ENCODE measurements at regions of chr10 and their contacts with region 1.

Region 1: GRCh38 chr10:76868098-76868977 is 769.3 kb downstream of the KCNMA1 start:
- DNase-seq: peak; percentile 40
- H3K4me3 ChIP-seq: no peak overlapping the region
- H3K27me3 ChIP-seq: peaks cover 2% of the 10 kb centered on the region
- CTCF ChIP-seq: no peak

Region 2: DNA sequence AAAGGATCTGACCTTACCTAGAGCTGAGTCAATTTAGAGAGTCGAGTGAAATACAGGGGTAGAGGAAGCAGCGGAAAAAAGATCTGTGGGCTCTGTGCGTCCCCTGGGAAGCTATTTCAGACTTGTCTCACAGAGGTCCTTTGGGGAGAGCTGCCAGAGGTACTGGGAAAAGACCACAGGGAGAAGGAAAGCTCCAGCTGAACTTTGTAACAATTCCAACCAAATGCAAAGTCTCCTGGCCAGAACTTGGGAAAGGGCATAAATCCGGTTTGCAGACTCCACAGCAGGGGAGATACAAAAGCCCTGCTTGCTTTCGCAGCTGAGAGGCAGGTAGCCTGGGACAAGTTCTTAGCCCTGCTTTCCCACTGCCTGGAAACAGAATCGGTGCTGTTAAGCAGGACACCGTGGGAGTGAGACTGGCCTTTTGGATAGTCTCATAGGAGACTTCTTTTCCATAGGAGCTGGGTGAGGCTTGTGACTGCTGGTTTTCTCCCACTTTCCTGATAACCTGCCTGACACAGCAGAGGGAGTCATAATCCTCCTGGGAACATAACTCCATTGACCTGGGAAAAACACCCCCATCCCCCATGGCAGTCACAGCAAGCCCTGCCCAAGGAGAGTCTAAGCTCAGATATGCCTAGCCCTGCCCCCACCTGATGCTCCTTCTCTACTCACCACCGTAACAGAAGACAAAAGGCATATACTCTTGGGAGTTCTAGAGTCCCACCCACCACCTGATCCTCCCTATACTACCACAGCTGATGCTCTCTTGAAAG is 156.9 kb before region 1 on chr10:
- CTCF ChIA-PET with region 1: no interaction called
- POLR2A ChIA-PET with region 1: no interaction called
- DNase-seq: no peak
- H3K4me3 ChIP-seq: no peak overlapping the region
- H3K27me3 ChIP-seq: peaks cover 2% of the 10 kb centered on the region; the same call in 1 of the 2 replicates
- CTCF ChIP-seq: no peak

Region 3: DNA sequence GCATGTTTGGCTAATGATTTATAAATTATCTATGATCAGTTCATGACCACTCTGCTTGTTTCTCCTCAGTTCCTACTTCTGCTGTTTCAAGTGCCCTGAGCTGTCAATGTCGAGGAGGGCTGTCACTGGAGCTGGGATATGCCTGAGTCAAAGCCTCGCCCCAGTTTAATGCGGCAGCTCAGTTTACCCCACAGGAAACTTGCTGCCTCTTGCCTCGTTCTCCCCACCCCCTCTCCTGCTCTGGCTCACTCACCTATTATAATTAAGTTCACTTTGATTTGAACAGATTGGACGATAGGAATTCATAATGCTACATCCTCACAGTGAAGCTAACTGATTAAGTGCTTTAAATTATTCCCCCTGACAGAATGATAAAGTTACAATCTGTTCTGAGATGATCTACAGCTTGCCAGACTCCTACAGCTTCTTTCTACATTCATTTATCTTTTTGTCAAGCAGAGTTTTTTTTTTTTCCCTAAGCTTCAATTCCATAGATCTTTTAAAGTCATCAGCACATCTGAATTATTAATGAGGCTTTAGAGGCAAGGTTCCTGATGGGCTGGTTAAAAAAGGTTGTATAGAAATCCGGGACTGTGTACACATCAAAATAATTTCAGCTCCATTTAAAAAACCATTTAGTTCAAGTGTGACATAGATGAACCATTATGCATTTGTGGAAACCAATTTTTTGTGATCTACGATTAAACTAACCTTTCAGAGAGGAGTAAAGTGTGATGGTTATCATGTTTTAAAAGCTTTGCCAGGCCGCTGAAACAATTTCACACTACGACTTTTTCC is 11.0 kb after region 1 on chr10:
- CTCF ChIA-PET with region 1: interaction called, 3 read pairs
- POLR2A ChIA-PET with region 1: interaction called, 25 read pairs
- DNase-seq: no peak
- H3K4me3 ChIP-seq: no peak overlapping the region
- H3K27me3 ChIP-seq: no peaks in the 10 kb centered on the region
- CTCF ChIP-seq: no peak

Measured in BJ (cell line).